ENCODE measurements at regions of chr1 and their contacts with region 1.

Region 1: DNA sequence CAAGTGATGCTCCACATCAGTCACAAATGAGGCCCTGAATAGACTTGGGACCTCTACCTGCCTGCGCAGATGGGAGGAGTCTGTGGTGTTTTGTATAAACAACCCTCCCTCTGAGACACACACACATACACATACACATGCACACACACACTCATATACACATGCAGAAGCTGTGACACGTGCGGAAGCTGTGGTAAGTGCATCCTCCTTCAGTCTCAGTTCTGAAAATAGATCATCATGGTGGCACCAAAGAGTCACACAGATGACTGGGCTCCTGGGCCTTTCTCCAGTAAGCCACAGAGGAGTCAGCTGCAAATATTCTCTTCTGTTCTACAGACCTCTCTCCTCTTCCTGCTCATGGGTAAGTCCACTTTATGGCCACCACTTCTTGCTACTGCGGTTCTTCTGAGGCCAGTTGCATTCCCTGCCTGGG is at the start of gene LY9:
- DNase-seq: peak; percentile 97
- ATAC-seq: peak; percentile 79
- H3K4me3 ChIP-seq: peak within 1 kb of the TSS; percentile 63
- H3K27ac ChIP-seq: peak within 1 kb of the TSS; percentile 78
- H3K4me1 ChIP-seq: peaks cover 42% of the 10 kb centered on the region
- H3K27me3 ChIP-seq: no peaks in the 10 kb centered on the region
- CTCF ChIP-seq: no peak
- EP300 ChIP-seq: peak; percentile 96 to 98
- POLR2A ChIP-seq: peak; percentile 66
- RAD21 ChIP-seq: no peak
- polyA plus RNA-seq, gene LY9: 2.7 to 2.8 TPM

Region 2: GRCh38 chr1:160806109-160806665 is 10.2 kb after region 1 on chr1:
- CTCF ChIA-PET with region 1: interaction called, 4 read pairs
- POLR2A ChIA-PET with region 1: interaction called, 4 read pairs
- RAD21 ChIA-PET with region 1: no interaction called
- SMC1A ChIA-PET with region 1: interaction called, 18 read pairs
- in situ Hi-C with region 1: no loop called
- intact Hi-C with region 1: no loop called
- DNase-seq: no peak
- ATAC-seq: peak; percentile 77
- H3K4me3 ChIP-seq: no peak overlapping the region
- H3K27ac ChIP-seq: no peak overlapping the region
- H3K4me1 ChIP-seq: no peaks in the 10 kb centered on the region; the same call in 1 of the 2 replicates
- H3K27me3 ChIP-seq: no peaks in the 10 kb centered on the region
- CTCF ChIP-seq: no peak
- EP300 ChIP-seq: no peak
- POLR2A ChIP-seq: no peak
- RAD21 ChIP-seq: no peak

Region 3: DNA sequence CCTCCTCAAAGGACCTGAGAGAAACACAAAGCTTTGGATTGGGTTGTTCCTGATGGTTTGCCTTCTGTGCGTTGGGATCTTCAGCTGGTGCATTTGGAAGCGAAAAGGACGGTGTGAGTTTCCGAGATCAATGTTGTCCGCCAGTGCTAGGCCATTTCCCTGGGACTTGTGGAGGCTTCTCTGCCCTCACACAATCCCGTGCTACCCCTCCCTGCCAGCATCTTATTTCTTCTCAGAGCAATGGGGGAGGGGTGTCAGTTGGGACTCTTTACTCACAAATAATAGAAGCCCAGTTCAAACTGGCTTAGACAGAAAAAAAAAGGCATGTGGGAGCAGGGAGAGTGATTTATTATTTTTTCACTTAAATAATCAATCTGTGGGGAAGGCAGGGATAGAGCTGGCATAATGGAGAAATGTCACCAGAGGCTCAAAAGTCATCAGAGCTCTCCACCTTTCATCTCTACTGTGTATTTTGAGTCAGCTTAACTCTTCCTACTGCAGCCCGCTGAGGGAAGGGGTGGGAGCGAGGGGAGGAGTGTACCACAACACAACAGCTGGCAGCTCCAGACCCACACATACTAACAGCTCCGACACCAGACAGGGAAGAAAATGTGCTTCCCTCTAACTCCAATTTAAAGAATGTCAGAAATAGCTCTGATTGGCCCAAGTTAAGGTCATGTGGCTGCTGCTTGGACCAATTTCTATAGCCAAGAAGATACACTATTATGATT is 22.4 kb after region 1 on chr1:
- CTCF ChIA-PET with region 1: interaction called, 5 read pairs
- POLR2A ChIA-PET with region 1: no interaction called
- RAD21 ChIA-PET with region 1: no interaction called
- SMC1A ChIA-PET with region 1: interaction called, 13 read pairs
- in situ Hi-C with region 1: no loop called
- intact Hi-C with region 1: no loop called
- DNase-seq: no peak
- ATAC-seq: no peak
- H3K4me3 ChIP-seq: no peak overlapping the region
- H3K27ac ChIP-seq: no peak overlapping the region
- H3K4me1 ChIP-seq: no peaks in the 10 kb centered on the region
- H3K27me3 ChIP-seq: no peaks in the 10 kb centered on the region
- CTCF ChIP-seq: no peak
- EP300 ChIP-seq: no peak
- POLR2A ChIP-seq: no peak
- RAD21 ChIP-seq: no peak

Region 4: GRCh38 chr1:161021165-161021960 is 225.4 kb after region 1 on chr1:
- CTCF ChIA-PET with region 1: no interaction called
- POLR2A ChIA-PET with region 1: no interaction called
- RAD21 ChIA-PET with region 1: no interaction called
- SMC1A ChIA-PET with region 1: no interaction called
- in situ Hi-C with region 1: no loop called
- intact Hi-C with region 1: no loop called
- DNase-seq: peak; percentile 66
- ATAC-seq: peak; percentile 96
- H3K4me3 ChIP-seq: peak overlapping the region; percentile 75
- H3K27ac ChIP-seq: peak overlapping the region; percentile 33
- H3K4me1 ChIP-seq: peaks cover 19% of the 10 kb centered on the region
- H3K27me3 ChIP-seq: no peaks in the 10 kb centered on the region
- CTCF ChIP-seq: no peak
- EP300 ChIP-seq: no peak
- POLR2A ChIP-seq: peak; percentile 69; the same call in 1 of the 2 replicates
- RAD21 ChIP-seq: no peak

Region 5: GRCh38 chr1:161305867-161306519 is 510.0 kb after region 1 on chr1:
- CTCF ChIA-PET with region 1: no interaction called
- POLR2A ChIA-PET with region 1: no interaction called
- RAD21 ChIA-PET with region 1: no interaction called
- SMC1A ChIA-PET with region 1: no interaction called
- in situ Hi-C with region 1: no loop called
- intact Hi-C with region 1: no loop called
- DNase-seq: peak; percentile 65
- ATAC-seq: peak; percentile 92
- H3K4me3 ChIP-seq: peak overlapping the region; percentile 94
- H3K27ac ChIP-seq: peak overlapping the region; percentile 13; the same call in 1 of the 2 replicates
- H3K4me1 ChIP-seq: peaks cover 12% of the 10 kb centered on the region
- H3K27me3 ChIP-seq: no peaks in the 10 kb centered on the region
- CTCF ChIP-seq: peak; percentile 41 to 51 (median 51); a peak in 5 of 6 replicates
- EP300 ChIP-seq: no peak
- POLR2A ChIP-seq: peak; percentile 77
- RAD21 ChIP-seq: peak; percentile 38; the same call in 1 of the 2 replicates